Activated CD8-positive, alpha-beta T cell treated with anti-CD3 and anti-CD28 coated beads for 36 hours (primary cell): ENCODE measurements at regions of chr10 and their contacts with region 1.

Region 1: DNA sequence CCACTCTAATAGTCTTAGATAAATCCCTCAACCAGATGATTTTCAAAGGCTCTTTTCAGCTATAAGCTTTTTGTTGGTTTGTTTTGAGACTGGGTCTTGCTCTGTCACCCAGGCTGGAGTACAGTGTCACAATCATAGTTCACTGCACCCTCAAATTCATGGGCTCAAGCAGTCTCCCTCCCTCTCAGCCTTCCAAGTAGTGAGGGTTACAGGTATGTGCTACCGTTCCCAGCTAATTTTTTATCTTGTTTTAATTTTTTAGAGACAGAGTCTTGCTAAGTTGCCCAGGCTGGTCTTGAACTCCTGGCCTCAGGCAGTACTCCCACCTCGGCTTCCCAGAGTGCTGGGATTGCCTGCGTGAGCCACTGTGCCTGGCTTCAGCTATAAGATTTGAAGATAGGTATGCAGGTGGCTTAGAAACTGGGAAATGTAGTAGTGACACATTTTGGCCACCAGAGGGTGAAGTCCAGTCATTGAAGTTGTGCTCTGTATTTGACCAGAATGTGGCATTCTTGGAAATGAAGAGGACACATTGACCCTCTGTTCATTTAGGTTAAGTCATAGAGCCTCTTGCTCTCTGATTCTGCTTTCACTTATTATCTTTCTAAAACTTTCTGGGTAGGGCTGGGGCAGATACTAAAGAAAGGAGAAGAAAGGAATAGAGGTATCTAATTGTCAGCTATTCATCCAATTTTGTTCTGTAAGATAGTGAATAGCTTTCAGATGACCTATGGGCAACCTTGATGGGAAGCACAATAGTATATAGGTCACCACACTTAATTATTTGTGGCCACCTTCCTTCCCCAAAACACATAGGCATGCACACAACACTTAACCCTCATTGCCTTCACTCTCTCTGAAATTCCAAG is 36.0 kb downstream of the R3HCC1L start:
- DNase-seq: peak; percentile 34
- ATAC-seq: peak; percentile 64
- H3K4me3 Mint-ChIP-seq: no peak overlapping the region
- H3K27ac Mint-ChIP-seq: no peak overlapping the region
- H3K4me1 Mint-ChIP-seq: peaks cover 22% of the 10 kb centered on the region
- H3K27me3 Mint-ChIP-seq: no peaks in the 10 kb centered on the region
- CTCF ChIP-seq: peak; percentile 71

Region 2: GRCh38 chr10:98110356-98110755 is 60.1 kb before region 1 on chr10:
- CTCF ChIA-PET with region 1: no interaction called
- POLR2A ChIA-PET with region 1: no interaction called
- intact Hi-C with region 1: no loop called
- DNase-seq: no peak
- ATAC-seq: no peak
- H3K4me3 Mint-ChIP-seq: no peak overlapping the region
- H3K27ac Mint-ChIP-seq: no peak overlapping the region
- H3K4me1 Mint-ChIP-seq: no peaks in the 10 kb centered on the region
- H3K27me3 Mint-ChIP-seq: peaks cover 21% of the 10 kb centered on the region
- CTCF ChIP-seq: no peak

Region 3: DNA sequence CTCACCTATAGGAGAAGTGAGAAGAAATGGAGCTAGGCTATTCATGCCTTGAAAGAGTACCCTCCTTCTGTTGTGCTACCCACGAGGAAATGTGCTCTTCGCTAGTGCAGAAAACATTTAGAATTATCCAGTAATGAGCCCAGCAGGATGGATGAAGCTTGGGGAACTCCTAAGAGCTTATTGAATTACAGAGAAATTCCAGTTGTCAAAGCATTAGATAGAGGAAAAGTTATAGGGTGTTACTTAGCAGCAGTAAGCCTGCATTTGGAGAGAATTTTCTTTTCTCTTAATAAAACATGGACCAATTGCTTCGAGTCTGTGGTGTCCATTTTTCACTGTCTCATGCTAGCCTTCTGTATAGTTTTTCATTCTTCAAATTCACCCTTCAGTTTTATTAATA is 31.1 kb before region 1 on chr10:
- CTCF ChIA-PET with region 1: interaction called, 10 read pairs
- POLR2A ChIA-PET with region 1: no interaction called
- intact Hi-C with region 1: no loop called
- DNase-seq: no peak
- ATAC-seq: no peak
- H3K4me3 Mint-ChIP-seq: no peak overlapping the region
- H3K27ac Mint-ChIP-seq: no peak overlapping the region
- H3K4me1 Mint-ChIP-seq: peaks cover 74% of the 10 kb centered on the region
- H3K27me3 Mint-ChIP-seq: no peaks in the 10 kb centered on the region
- CTCF ChIP-seq: no peak

Region 4: DNA sequence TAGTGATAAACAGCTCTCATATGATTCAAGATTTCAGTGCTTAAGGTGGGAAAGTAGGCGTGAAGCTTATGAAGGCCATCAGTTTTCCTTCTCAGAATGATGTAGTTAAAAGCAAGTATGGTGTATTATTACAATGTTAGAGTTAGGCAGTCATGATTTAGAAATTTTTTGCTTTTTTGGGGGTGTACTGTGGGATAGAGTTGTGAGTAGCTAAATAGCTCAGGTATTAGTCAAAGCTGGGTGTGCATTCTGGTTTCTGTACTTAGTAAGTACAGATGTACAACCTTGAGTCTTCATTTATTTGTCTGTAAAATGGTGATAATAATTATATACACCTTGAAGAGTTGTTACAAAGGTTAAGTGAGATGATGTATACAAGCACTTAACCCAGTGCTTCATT is 16.2 kb after region 1 on chr10:
- CTCF ChIA-PET with region 1: interaction called, 16 read pairs
- POLR2A ChIA-PET with region 1: no interaction called
- intact Hi-C with region 1: no loop called
- DNase-seq: no peak
- ATAC-seq: no peak
- H3K4me3 Mint-ChIP-seq: no peak overlapping the region
- H3K27ac Mint-ChIP-seq: no peak overlapping the region
- H3K4me1 Mint-ChIP-seq: peaks cover 13% of the 10 kb centered on the region
- H3K27me3 Mint-ChIP-seq: no peaks in the 10 kb centered on the region
- CTCF ChIP-seq: no peak

Region 5: DNA sequence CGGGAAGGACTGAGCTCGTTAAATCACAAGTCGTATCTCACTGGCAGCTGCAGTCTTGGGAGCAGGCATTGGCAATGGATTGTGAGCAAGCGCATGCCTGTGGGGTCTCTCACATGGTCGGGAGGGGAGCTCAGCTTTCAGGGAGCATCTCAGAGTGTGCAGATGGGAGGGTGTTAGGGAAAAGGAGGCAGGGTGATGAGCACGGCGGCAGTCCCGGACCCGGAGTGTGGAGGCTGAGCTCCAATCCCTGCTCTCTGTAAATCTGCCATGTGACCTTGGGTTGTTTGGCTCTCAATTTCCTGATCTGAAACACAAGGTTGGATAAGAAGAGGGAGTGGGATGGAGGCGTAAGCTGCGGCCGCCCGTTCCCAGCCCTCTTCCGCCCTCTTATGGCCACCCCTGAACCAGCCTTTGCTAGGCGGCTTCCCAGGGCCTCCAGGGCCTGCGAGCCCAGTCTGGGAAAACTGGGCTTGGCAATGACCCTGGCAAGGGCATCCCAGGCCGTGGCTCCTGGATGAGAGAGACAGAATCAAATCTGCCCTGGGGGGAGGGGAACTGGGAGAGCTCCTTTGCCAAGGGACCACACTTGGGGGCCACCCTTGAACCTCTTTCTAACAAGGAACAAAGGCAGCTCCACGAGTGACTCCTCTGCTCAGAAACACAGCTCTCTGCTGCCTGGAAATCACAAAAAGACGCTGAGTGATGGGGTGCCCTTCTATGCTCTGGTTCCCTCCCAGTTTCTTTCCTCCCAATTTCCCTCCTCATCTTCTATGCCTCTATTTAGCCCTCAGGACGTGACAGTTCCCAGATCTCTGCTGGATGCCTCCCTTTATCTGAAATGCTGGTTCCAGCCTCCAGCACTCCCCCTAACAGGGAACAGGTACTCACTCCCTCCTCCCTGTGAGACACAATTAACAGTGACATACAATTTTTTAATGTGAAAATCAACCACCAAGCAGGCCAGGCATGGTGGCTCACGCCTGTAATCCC is 139.2 kb after region 1 on chr10:
- CTCF ChIA-PET with region 1: interaction called, 18 read pairs
- POLR2A ChIA-PET with region 1: no interaction called
- intact Hi-C with region 1: loop called (anchors 10 kb)
- DNase-seq: peak; percentile 35
- ATAC-seq: no peak
- H3K4me3 Mint-ChIP-seq: no peak overlapping the region
- H3K27ac Mint-ChIP-seq: no peak overlapping the region
- H3K4me1 Mint-ChIP-seq: no peaks in the 10 kb centered on the region
- H3K27me3 Mint-ChIP-seq: peaks cover 22% of the 10 kb centered on the region
- CTCF ChIP-seq: peak; percentile 49

Region 6: DNA sequence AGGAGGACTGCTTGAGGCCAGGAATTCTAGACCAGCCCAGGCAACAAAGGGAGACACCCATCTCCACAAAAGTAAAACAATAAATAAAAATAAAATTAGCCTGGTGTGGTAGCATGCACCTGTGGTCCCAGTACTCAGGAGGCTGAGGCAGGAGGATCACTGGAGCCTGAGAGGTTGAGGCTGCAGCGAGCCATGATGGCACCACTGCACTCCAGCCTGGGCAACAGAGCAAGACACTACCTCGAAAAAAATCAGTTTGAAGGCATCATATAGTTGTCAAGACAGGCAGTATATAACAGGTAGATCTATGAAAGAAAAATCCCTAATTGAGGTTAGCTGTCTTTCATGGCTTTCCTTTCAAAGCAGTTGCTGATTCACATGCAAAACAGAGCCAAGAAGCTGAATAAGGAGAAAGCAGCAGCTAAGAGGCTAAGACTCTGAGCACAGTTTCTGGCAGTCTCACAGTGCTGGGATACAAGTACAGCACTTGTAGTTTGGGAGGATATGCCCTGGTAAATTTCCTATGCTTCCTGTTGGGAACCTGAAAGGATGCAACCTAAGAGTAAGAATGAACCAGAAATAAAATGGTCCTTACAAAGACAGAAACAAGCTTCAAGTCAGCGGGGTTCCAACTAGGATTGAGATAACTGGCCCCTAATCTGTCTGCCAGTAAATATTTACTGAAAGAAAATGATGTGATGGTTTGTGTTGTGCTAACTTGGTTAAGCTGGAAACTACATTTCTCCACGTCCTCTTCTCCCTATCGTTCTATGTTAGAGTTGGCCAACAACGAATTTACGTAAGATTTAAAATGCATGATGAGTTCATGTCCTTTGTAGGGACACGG is 644.8 kb after region 1 on chr10:
- CTCF ChIA-PET with region 1: no interaction called
- POLR2A ChIA-PET with region 1: no interaction called
- intact Hi-C with region 1: no loop called
- DNase-seq: no peak
- ATAC-seq: no peak
- H3K4me3 Mint-ChIP-seq: no peak overlapping the region
- H3K27ac Mint-ChIP-seq: no peak overlapping the region
- H3K4me1 Mint-ChIP-seq: no peaks in the 10 kb centered on the region
- H3K27me3 Mint-ChIP-seq: no peaks in the 10 kb centered on the region
- CTCF ChIP-seq: no peak